MCF 10A (cell line): ENCODE measurements at regions of chr11 and their contacts with region 1.

Region 1: DNA sequence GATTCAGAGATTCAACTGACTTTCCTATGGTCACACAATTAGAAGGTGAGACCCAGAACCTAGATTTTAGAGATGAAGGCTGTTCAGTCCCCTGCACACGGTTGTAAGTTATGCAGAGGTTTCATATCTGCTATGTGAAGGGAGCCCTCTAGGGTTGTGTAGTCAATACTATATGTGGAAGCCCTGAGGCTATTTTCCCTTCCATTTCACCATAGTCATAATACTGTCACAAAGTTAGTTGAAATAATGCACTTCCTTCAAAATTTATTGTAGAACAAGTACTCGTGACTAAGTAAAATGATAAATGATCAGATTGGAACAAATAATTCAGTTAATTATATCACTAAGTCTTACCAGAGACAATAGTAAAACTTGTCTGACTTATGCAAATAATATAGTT is 48.8 kb downstream of the ENDOD1 start:
- DNase-seq: peak; percentile 20
- H3K4me3 Mint-ChIP-seq: no peak overlapping the region
- H3K27ac Mint-ChIP-seq: no peak overlapping the region
- H3K4me1 Mint-ChIP-seq: peaks cover 13% of the 10 kb centered on the region
- H3K27me3 Mint-ChIP-seq: no peaks in the 10 kb centered on the region
- CTCF ChIP-seq: no peak

Region 2: GRCh38 chr11:95084509-95084908 is 53.9 kb before region 1 on chr11:
- CTCF ChIA-PET with region 1: interaction called, 3 read pairs
- POLR2A ChIA-PET with region 1: interaction called, 19 read pairs
- intact Hi-C with region 1: no loop called
- DNase-seq: peak; percentile 79
- H3K4me3 Mint-ChIP-seq: no peak overlapping the region
- H3K27ac Mint-ChIP-seq: no peak overlapping the region
- H3K4me1 Mint-ChIP-seq: peaks cover 15% of the 10 kb centered on the region
- H3K27me3 Mint-ChIP-seq: no peaks in the 10 kb centered on the region
- CTCF ChIP-seq: no peak

Region 3: DNA sequence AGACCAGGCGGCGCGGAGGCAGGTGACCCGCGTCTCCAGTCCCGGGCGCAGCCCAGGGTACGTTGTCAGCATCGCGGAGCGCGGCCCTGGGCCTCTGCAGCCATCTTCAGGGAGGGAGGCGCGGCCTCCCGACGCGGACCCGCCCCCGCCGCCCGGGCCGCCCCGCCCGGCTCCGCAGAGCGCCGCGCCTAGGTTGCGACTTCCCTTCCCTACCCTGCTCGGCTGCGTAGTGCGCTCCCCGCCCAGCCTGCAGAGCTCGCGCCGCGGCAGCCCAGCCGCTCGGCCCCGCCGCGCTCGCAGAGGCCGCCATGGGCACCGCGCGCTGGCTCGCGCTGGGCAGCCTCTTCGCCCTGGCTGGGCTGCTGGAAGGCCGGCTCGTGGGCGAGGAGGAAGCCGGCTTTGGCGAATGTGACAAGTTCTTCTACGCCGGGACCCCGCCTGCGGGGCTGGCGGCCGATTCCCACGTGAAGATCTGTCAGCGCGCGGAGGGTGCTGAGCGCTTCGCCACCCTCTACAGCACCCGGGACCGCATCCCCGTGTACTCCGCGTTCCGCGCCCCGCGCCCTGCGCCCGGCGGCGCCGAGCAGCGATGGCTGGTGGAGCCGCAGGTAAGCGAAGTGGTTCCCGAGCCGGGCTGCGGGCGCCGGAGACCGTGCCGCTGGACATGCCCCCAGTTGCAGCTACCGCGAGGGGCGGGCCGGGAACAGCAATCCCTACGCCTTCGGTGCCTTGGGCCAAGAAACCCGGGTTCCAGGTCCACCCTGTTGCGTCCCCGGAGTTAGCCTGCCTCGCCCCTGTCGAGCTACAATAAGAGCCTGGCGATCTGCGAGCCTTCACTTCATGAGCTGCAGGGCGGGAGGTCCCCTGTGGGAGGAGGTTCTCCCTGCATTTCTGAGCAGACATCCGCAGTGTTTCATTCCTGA is 48.6 kb before region 1 on chr11 and contains the start of gene ENDOD1:
- CTCF ChIA-PET with region 1: interaction called, 4 read pairs
- POLR2A ChIA-PET with region 1: interaction called, 19 read pairs
- intact Hi-C with region 1: loop called (anchors 1 kb)
- DNase-seq: peak; percentile 80
- H3K4me3 Mint-ChIP-seq: peak within 1 kb of the TSS; percentile 85
- H3K27ac Mint-ChIP-seq: peak within 1 kb of the TSS; percentile 64
- H3K4me1 Mint-ChIP-seq: peaks cover 36% of the 10 kb centered on the region
- H3K27me3 Mint-ChIP-seq: no peaks in the 10 kb centered on the region
- CTCF ChIP-seq: no peak
- total RNA-seq, gene ENDOD1: 10.8 and 11.4 TPM in 2 replicates

Region 4: GRCh38 chr11:95161248-95161647 is 22.8 kb after region 1 on chr11:
- CTCF ChIA-PET with region 1: no interaction called
- POLR2A ChIA-PET with region 1: no interaction called
- intact Hi-C with region 1: no loop called
- DNase-seq: no peak
- H3K4me3 Mint-ChIP-seq: no peak overlapping the region
- H3K27ac Mint-ChIP-seq: no peak overlapping the region
- H3K4me1 Mint-ChIP-seq: no peaks in the 10 kb centered on the region
- H3K27me3 Mint-ChIP-seq: no peaks in the 10 kb centered on the region
- CTCF ChIP-seq: no peak

Region 5: DNA sequence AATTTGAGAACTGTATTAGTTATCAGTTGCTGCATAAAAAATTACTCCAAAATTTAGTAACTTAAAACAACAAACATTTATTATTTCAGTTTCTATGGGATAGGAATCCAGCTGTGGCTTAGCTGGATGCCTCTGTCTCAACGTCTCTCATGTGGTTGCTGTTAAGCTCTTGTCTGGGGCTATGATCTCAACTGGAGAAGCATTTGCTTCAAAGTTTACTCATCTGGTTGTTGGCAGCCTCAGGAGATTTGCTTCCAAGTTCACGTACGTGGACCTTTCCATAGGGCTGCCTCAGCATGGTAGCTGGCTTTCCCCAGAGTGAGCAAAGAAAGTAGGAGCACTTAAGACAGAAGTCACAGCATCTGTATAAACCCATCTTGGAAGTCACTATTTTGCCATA is 237.4 kb after region 1 on chr11:
- CTCF ChIA-PET with region 1: no interaction called
- POLR2A ChIA-PET with region 1: no interaction called
- intact Hi-C with region 1: no loop called
- DNase-seq: no peak
- H3K4me3 Mint-ChIP-seq: no peak overlapping the region
- H3K27ac Mint-ChIP-seq: no peak overlapping the region
- H3K4me1 Mint-ChIP-seq: no peaks in the 10 kb centered on the region
- H3K27me3 Mint-ChIP-seq: no peaks in the 10 kb centered on the region
- CTCF ChIP-seq: no peak

Region 6: DNA sequence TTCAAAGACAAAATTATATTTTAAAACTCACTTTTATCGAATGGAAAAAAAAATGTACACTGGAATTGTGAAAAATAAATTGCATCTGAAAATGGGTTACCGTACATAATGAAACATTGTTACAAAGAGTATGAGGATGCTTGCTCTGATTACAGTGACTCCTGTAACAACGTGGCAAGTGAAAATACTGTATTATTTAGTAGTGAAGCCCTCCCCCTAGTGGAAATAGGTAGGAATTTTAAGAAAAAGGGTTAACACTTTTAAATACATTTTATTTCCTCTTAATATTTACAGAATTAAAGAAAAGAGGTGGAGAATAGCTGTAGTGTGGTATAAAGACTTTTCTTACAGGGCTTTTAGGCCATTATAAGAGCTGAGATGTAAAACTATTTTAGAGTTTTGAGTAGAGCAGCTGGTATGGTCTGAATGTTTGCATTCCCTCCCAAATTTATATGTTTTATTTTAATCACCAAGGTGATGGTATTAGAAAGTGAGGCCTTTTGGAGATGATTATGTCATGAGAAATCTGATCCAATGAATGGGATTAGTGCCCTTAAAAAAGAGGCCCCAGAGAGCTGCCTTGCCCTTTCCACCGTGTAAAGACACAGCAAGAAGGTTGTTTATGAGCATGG is 625.9 kb after region 1 on chr11:
- CTCF ChIA-PET with region 1: interaction called, 10 read pairs
- POLR2A ChIA-PET with region 1: no interaction called
- intact Hi-C with region 1: no loop called
- DNase-seq: peak; percentile 54
- H3K4me3 Mint-ChIP-seq: no peak overlapping the region
- H3K27ac Mint-ChIP-seq: no peak overlapping the region
- H3K4me1 Mint-ChIP-seq: peaks cover 10% of the 10 kb centered on the region
- H3K27me3 Mint-ChIP-seq: no peaks in the 10 kb centered on the region
- CTCF ChIP-seq: peak; percentile 61